Activated naive CD4-positive, alpha-beta T cell treated with anti-CD3 and anti-CD28 coated beads for 36 hours (primary cell): ENCODE measurements at regions of chr1 and their contacts with region 1.

Region 1: DNA sequence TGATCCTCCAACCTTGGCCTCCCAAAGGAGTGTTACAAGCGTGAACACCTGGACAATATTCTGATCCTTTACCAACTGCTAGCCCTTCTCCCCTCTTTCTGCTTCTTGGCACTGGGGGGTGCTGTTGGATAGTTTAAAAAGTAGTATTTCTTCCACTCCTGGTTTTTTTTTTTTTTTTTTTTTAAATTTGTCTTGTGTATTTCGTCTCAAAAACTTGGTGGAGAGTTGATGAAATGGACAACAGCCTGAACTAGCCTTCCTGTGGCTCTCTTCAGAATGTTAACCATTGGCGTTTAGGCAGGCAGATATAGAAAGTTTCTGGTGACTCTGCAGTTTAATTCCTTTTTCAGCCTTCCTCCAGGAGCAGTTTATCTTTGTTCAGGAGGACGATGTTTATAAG is 69.7 kb upstream of the USP24 start:
- DNase-seq: peak; percentile 52
- H3K4me3 Mint-ChIP-seq: no peak overlapping the region
- H3K27ac Mint-ChIP-seq: no peak overlapping the region
- H3K4me1 Mint-ChIP-seq: peaks cover 25% of the 10 kb centered on the region
- H3K27me3 Mint-ChIP-seq: peaks cover 2% of the 10 kb centered on the region

Region 2: GRCh38 chr1:54987919-54988705 is 296.7 kb before region 1 on chr1:
- CTCF ChIA-PET with region 1: no interaction called
- intact Hi-C with region 1: no loop called
- DNase-seq: no peak
- H3K4me3 Mint-ChIP-seq: no peak overlapping the region
- H3K27ac Mint-ChIP-seq: no peak overlapping the region
- H3K4me1 Mint-ChIP-seq: no peaks in the 10 kb centered on the region
- H3K27me3 Mint-ChIP-seq: peaks cover 8% of the 10 kb centered on the region

Region 3: DNA sequence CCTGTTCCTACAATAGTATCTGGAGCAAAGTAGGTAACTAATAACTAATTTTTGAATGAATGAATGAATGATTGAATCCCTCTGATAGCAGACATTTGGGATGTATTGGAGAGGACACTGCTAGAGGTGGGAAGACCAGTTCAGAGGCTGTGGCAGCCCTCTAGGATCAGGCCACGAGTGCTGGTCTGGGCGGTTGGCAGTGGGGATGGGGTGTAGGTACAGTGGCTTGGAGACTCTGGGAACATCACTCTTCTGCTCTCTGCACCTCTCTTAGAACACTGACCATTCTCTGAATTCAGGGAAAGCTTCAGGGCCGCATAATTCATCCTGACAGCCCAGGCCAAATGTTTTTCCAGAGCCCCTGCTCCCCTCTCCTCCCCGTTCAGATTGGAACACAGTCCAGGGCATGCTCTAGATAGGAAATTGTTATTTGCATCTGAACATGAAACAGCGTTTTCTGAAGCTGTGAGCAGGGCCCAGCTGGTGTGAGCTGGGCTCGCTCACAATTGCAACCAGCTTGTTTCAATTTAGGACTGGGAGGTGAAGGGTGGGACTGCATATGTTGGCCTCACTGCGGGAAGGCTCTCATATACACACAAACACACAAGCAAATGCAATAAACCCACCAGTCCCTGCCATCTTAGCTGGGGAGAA is 183.4 kb after region 1 on chr1:
- CTCF ChIA-PET with region 1: no interaction called
- intact Hi-C with region 1: loop called (anchors 10 kb)
- DNase-seq: no peak
- H3K4me3 Mint-ChIP-seq: no peak overlapping the region
- H3K27ac Mint-ChIP-seq: no peak overlapping the region
- H3K4me1 Mint-ChIP-seq: no peaks in the 10 kb centered on the region
- H3K27me3 Mint-ChIP-seq: peaks cover 2% of the 10 kb centered on the region

Region 4: GRCh38 chr1:55555956-55556725 is 271.3 kb after region 1 on chr1:
- CTCF ChIA-PET with region 1: no interaction called
- intact Hi-C with region 1: no loop called
- DNase-seq: no peak
- H3K4me3 Mint-ChIP-seq: no peak overlapping the region
- H3K27ac Mint-ChIP-seq: no peak overlapping the region
- H3K4me1 Mint-ChIP-seq: no peaks in the 10 kb centered on the region
- H3K27me3 Mint-ChIP-seq: no peaks in the 10 kb centered on the region